ENCODE measurements at regions of chr16 and their contacts with region 1.

Region 1: GRCh38 chr16:75789237-75789636 is 62.9 kb upstream of the CPHXL start:
- DNase-seq: peak; percentile 61
- CTCF ChIP-seq: peak; percentile 75

Region 2: GRCh38 chr16:75745823-75746222 is 43.4 kb before region 1 on chr16:
- in situ Hi-C with region 1: no loop called
- DNase-seq: peak; percentile 20
- CTCF ChIP-seq: no peak

Region 3: GRCh38 chr16:77190478-77191258 is 1401.4 kb after region 1 on chr16 and contains the start of gene MON1B:
- in situ Hi-C with region 1: loop called (anchors 25 kb)
- DNase-seq: peak; percentile 96
- CTCF ChIP-seq: no peak